ENCODE measurements at regions of chr10 and their contacts with region 1.

Region 1: DNA sequence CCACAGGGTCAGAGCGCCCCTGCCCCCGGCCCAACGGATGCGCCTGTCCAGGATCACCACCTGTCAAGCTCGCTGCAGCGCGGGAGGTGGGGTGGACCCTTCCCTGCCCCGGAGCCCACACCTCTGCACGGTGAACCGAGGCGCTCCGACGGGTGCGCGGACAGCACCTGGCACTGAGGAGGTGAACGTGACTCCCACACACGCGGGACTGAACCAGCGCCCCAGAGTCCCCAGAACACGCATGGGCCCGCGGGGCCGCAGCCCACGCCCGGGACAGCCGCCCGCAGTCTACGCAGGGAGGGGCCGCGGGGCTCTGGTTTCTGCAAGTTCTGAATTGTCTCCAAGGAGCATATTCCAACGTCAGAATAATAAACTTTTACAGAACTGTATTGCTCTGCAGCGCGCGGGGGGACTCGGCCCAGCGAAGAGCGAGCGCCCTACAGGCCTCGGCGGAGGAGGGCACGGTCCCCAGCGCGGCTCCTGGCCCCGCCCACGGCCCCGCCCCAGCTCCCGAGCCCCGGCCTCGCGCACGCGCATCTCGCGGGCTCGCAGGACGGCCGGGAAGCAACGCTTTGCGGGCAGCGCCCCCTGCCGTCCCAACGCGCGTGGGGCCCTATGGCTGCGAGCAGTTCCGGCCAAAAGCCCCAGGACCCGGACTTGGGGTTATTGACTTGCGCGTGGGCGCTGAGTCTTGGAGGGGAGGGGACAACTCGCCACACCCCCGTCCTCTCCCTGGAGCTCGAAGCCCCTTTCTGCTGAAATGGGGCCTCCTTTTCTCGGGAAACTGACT is 29.7 kb downstream of the OAT start:
- DNase-seq: peak; percentile 96
- ATAC-seq: peak; percentile 99
- H3K4me3 Mint-ChIP-seq: peak overlapping the region; percentile 15
- H3K27ac Mint-ChIP-seq: no peak overlapping the region
- H3K4me1 Mint-ChIP-seq: no peaks in the 10 kb centered on the region
- H3K27me3 Mint-ChIP-seq: peaks cover 2% of the 10 kb centered on the region

Region 2: GRCh38 chr10:123582084-123582989 is 806.7 kb before region 1 on chr10:
- CTCF ChIA-PET with region 1: interaction called, 5 read pairs
- POLR2A ChIA-PET with region 1: no interaction called
- intact Hi-C with region 1: loop called (anchors 5 kb)
- DNase-seq: peak; percentile 84
- ATAC-seq: peak; percentile 58
- H3K4me3 Mint-ChIP-seq: no peak overlapping the region
- H3K27ac Mint-ChIP-seq: no peak overlapping the region
- H3K4me1 Mint-ChIP-seq: no peaks in the 10 kb centered on the region
- H3K27me3 Mint-ChIP-seq: peaks cover 38% of the 10 kb centered on the region

Region 3: GRCh38 chr10:124193309-124193696 is 195.7 kb before region 1 on chr10:
- CTCF ChIA-PET with region 1: interaction called, 3 read pairs
- POLR2A ChIA-PET with region 1: no interaction called
- intact Hi-C with region 1: loop called in 1 of 2 experiments (anchors 1 kb)
- DNase-seq: no peak
- ATAC-seq: no peak
- H3K4me3 Mint-ChIP-seq: no peak overlapping the region
- H3K27ac Mint-ChIP-seq: no peak overlapping the region
- H3K4me1 Mint-ChIP-seq: no peaks in the 10 kb centered on the region
- H3K27me3 Mint-ChIP-seq: peaks cover 18% of the 10 kb centered on the region

Region 4: DNA sequence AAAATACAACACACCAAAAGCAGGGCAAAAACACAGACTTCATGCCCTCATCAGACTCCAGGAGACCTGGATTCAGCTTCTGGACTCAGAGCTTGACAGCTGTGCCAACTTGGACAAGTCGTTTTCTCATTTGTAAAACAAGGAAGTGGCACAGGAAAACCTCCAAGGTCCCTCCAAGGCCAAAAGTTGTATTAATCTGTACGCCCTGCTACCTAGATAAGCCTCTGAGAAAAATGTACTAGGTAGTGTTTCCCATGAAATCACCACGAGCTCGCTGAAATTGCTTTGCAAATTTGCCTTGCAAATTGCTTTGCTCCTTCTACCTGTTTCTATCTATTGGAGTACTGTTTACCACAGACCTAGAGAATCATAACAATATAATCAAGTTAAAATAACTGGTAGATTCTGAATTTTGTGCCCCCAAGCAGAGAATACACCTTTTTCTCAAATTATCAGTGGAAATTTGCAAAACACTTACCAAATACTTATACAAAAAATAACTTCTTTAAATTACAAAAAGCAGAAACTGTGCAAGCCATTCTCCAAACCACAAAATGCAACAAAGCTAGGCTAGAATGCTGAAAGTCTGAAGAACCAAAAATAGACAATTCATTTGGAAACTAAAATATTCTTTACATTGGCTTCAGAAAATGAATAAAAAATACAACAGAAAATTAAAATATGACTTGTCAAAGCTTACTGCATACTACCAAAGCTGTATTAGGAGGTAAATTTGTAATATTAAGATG is 137.5 kb before region 1 on chr10:
- CTCF ChIA-PET with region 1: interaction called, 10 read pairs
- POLR2A ChIA-PET with region 1: no interaction called
- intact Hi-C with region 1: no loop called
- DNase-seq: no peak
- ATAC-seq: no peak
- H3K4me3 Mint-ChIP-seq: no peak overlapping the region
- H3K27ac Mint-ChIP-seq: no peak overlapping the region
- H3K4me1 Mint-ChIP-seq: no peaks in the 10 kb centered on the region
- H3K27me3 Mint-ChIP-seq: peaks cover 2% of the 10 kb centered on the region

Region 5: GRCh38 chr10:124267231-124267885 is 121.7 kb before region 1 on chr10:
- CTCF ChIA-PET with region 1: no interaction called
- POLR2A ChIA-PET with region 1: no interaction called
- intact Hi-C with region 1: loop called in 1 of 2 experiments (anchors 10 kb)
- DNase-seq: no peak
- ATAC-seq: no peak
- H3K4me3 Mint-ChIP-seq: no peak overlapping the region
- H3K27ac Mint-ChIP-seq: no peak overlapping the region
- H3K4me1 Mint-ChIP-seq: no peaks in the 10 kb centered on the region
- H3K27me3 Mint-ChIP-seq: peaks cover 2% of the 10 kb centered on the region

Region 6: GRCh38 chr10:124364633-124365032 is 24.4 kb before region 1 on chr10:
- CTCF ChIA-PET with region 1: interaction called, 10 read pairs
- POLR2A ChIA-PET with region 1: no interaction called
- intact Hi-C with region 1: no loop called
- DNase-seq: no peak
- ATAC-seq: no peak
- H3K4me3 Mint-ChIP-seq: no peak overlapping the region
- H3K27ac Mint-ChIP-seq: no peak overlapping the region
- H3K4me1 Mint-ChIP-seq: no peaks in the 10 kb centered on the region
- H3K27me3 Mint-ChIP-seq: peaks cover 2% of the 10 kb centered on the region

Region 7: GRCh38 chr10:124418726-124419501 is 29.9 kb after region 1 on chr10 and contains the start of gene OAT:
- CTCF ChIA-PET with region 1: interaction called, 16 read pairs
- POLR2A ChIA-PET with region 1: interaction called, 4 read pairs
- intact Hi-C with region 1: loop called (anchors 1 to 2 kb)
- DNase-seq: peak; percentile 99
- ATAC-seq: peak; percentile 98
- H3K4me3 Mint-ChIP-seq: peak within 1 kb of the TSS; percentile 78
- H3K27ac Mint-ChIP-seq: peak within 1 kb of the TSS; percentile 21
- H3K4me1 Mint-ChIP-seq: peaks cover 16% of the 10 kb centered on the region
- H3K27me3 Mint-ChIP-seq: no peaks in the 10 kb centered on the region
- total RNA-seq, gene OAT: 36.5 to 39.6 TPM

Region 8: GRCh38 chr10:124802313-124802675 is 413.3 kb after region 1 on chr10:
- CTCF ChIA-PET with region 1: no interaction called
- POLR2A ChIA-PET with region 1: no interaction called
- intact Hi-C with region 1: no loop called
- DNase-seq: no peak
- ATAC-seq: peak; percentile 43
- H3K4me3 Mint-ChIP-seq: peak overlapping the region; percentile 91
- H3K27ac Mint-ChIP-seq: peak overlapping the region; percentile 90
- H3K4me1 Mint-ChIP-seq: peaks cover 19% of the 10 kb centered on the region
- H3K27me3 Mint-ChIP-seq: no peaks in the 10 kb centered on the region